HepG2 (cell line): ENCODE measurements at regions of chr1 and their contacts with region 1.

Region 1: DNA sequence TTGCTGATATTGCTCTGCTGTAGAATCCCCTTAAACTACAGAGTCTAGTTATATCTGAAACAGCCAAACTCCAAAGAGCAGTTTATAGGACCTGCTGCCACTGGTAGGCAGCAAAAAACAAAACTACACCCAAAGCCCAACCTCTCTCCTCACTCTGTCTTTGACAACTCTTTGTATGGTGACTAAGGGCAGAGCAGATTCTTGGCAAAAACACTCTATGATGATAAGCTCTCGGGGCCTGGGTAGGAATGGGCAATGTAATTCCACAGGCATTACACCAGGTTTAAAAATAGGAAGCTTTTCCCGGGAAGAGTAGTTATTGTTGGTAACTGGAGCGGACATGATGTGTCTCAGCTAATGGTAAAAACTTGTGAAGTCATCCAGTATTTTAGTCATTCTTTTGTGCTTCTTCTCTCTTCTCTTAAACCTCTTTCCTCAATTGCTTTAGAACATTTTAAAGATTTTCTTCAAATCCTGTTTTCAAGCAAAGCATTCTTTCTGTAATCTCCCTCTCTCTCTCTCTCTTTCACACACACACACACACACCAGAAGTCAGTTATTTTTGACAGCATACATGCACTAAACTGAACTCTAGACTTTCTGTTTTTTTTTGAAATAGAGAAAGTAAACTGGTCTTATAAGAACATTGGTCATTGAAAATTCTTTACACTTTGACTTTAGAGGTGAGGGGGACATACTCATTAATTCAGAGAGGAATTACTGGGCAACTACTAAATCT is 193.5 kb downstream of the PAPPA2 start:
- DNase-seq: no peak
- ATAC-seq: no peak
- H3K4me3 ChIP-seq: no peak overlapping the region
- H3K27ac ChIP-seq: no peak overlapping the region
- H3K4me1 ChIP-seq: no peaks in the 10 kb centered on the region
- H3K27me3 ChIP-seq: no peaks in the 10 kb centered on the region
- CTCF ChIP-seq: no peak
- EP300 ChIP-seq: no peak
- POLR2A ChIP-seq: no peak
- RAD21 ChIP-seq: no peak

Region 2: DNA sequence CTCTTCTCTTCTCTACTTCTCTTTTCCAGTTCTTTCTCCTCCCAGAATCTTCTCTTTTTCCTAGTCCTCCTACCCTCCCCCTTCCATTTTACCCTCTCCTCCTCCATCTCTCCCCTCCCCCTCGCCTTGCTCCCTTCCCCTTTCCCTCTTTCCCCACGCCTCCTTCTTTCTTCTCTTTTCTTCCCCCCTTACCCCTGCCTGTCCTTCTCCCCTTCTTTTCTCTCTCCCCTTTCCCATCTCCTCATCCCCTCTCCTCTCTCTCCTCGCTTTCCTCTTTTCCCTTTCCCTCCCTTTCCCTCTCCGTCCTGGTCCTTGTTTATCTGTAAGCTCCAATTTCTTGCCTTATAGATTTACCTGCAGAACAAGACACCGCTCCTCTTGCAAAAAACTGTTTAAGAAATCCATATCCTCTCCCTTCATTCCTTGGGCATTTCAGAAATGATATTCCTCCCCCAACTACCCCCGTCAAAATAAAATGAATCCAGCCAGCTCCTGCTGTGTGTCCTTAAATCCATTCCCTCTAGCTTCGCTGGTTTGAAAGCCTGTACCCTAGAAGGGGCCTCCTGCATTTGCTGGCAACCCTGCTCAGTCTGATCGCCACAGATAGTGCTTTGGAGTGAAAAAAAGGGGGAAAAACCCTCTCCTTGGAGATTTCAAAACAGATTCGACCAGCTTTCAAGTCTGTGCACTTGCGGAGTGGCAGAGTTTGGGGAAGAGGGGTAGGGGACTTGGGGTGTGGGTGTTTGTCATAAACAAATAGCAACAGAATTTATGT is 104.0 kb before region 1 on chr1:
- CTCF ChIA-PET with region 1: no interaction called
- POLR2A ChIA-PET with region 1: no interaction called
- in situ Hi-C with region 1: no loop called
- intact Hi-C with region 1: no loop called
- DNase-seq: no peak
- ATAC-seq: no peak
- H3K4me3 ChIP-seq: no peak overlapping the region
- H3K27ac ChIP-seq: no peak overlapping the region
- H3K4me1 ChIP-seq: no peaks in the 10 kb centered on the region
- H3K27me3 ChIP-seq: peaks cover 0 to 13% of the 10 kb centered on the region in 2 experiments; a peak in 2 of 5 replicates
- CTCF ChIP-seq: no peak
- EP300 ChIP-seq: no peak
- POLR2A ChIP-seq: no peak
- RAD21 ChIP-seq: no peak

Region 3: DNA sequence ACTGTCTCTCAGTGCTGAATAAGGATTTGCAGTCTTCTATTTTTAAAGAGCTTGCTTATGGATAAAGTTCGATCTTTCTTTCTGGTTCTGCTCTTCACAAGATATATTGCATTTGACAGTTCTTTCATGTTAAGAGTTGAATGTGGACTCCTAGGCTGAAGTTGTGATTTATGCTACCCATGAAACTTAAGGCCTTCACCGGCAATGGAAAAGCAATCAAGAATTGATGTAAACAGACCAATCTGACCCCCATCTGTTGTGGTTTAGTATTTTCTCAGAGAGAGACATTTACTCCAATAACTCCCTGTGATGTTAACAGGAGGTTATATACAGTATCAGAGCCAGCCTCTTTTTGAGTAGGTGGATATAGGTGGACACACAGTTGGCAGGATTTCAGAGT is 27.7 kb before region 1 on chr1:
- CTCF ChIA-PET with region 1: no interaction called
- POLR2A ChIA-PET with region 1: no interaction called
- in situ Hi-C with region 1: no loop called
- intact Hi-C with region 1: loop called (anchors 1 kb)
- DNase-seq: no peak
- ATAC-seq: no peak
- H3K4me3 ChIP-seq: no peak overlapping the region
- H3K27ac ChIP-seq: no peak overlapping the region
- H3K4me1 ChIP-seq: no peaks in the 10 kb centered on the region
- H3K27me3 ChIP-seq: no peaks in the 10 kb centered on the region
- CTCF ChIP-seq: no peak
- EP300 ChIP-seq: no peak
- POLR2A ChIP-seq: no peak
- RAD21 ChIP-seq: no peak